K562 (cell line): ENCODE measurements at regions of chr3 and their contacts with region 1.

Region 1: DNA sequence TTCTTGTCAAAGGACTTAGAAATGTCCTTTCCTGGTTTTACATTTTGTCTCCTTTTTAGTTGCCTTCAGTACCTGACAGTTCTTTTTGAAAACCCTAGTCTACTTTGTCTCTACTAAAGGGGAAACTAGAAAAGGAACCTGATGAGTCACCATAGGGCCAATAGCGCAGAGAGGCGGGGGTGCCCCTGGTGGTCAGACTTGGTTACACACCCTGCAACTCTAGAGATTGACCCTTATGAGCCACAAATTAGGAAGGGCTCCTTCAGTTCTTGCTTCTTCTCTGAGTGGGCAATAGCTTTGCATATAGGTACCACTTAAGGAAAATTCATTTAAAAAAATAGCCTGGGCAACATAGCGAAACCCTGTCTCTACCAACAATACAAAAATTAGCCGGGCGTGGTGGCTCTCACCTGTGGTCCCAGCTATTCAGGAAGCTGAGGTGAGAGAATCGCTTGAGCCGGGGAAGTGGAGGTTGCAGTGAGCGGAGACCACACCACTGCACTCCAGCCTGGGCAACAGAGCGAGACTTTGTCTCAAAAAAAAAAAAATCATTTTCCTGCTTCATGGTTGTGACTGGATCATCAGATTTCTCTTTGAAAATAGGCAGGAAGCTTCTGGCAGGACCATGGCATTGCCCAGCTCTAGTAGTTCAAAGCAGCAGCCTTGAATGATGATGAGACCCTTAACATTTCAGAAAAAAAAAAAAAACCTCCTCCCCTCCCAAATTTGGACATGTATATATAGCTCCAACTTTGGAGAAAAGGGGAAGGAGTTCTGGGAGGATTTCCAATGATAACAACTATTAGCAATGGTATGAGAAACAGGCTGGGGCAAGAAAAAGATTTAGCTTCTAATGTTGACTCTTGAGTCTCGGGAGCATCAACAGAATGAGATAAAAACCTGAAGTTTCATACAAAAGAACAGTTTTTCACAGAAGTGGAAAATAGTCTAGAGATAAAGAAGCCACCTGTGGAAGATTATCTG is 45.2 kb upstream of the RASA2 start:
- DNase-seq: peak; percentile 83 to 88 (median 85)
- ATAC-seq: peak; percentile 99
- H3K4me3 ChIP-seq: no peak overlapping the region
- H3K27ac ChIP-seq: peak overlapping the region; percentile 73
- H3K4me1 ChIP-seq: peaks cover 0 to 14% of the 10 kb centered on the region in 2 experiments; a peak in 2 of 5 replicates
- H3K27me3 ChIP-seq: no peaks in the 10 kb centered on the region
- CTCF ChIP-seq: peak; percentile 84 to 89 (median 86)
- EP300 ChIP-seq: peak; percentile 27; the same call in 1 of the 2 replicates
- POLR2A ChIP-seq: no peak
- RAD21 ChIP-seq: peak; percentile 57 to 74

Region 2: DNA sequence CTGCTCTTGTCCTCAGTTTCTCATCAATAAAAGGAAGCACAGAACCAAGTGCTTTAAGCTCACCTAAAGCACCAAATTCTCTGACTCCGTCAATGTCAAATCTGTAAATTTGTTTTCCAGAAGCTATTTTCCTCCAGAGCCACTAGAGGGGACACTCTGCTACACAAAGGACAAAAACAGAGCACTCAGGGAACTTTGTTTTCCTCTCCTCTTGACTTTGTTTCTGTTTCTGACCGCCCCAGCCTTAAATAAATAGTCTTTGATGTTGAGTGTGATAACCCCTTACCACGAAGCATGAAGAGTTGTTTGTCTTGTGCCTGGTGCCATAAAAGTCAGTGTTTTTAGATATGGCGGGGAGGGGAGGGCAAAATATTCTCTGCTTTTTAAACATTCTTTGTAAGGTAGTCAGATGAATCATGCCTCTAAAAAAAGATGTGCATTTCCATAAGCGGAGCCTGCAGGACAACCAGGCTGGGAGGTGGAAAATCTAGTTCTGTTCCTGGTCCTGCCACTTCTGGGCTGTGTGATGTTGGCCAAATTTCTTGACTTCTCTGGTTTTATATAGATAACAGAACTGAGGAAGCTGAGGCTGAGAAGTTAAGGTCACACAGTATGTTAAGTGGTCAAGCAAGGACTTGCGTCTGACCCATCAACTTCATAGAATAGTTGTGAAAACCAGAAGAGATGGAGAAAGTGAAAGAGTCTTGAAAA is 80.6 kb before region 1 on chr3:
- CTCF ChIA-PET with region 1: no interaction called
- POLR2A ChIA-PET with region 1: no interaction called
- in situ Hi-C with region 1: loop called (anchors 5 kb)
- intact Hi-C with region 1: loop called (anchors 2 kb)
- DNase-seq: peak; percentile 45 to 78 (median 60)
- ATAC-seq: peak; percentile 86
- H3K4me3 ChIP-seq: no peak overlapping the region
- H3K27ac ChIP-seq: peak overlapping the region; percentile 37; the same call in 1 of the 3 replicates
- H3K4me1 ChIP-seq: peaks cover 0 to 30% of the 10 kb centered on the region in 2 experiments; a peak in 3 of 5 replicates
- H3K27me3 ChIP-seq: no peaks in the 10 kb centered on the region
- CTCF ChIP-seq: peak; percentile 77 to 90 (median 81)
- EP300 ChIP-seq: no peak
- POLR2A ChIP-seq: no peak
- RAD21 ChIP-seq: peak; percentile 90 to 93

Region 3: DNA sequence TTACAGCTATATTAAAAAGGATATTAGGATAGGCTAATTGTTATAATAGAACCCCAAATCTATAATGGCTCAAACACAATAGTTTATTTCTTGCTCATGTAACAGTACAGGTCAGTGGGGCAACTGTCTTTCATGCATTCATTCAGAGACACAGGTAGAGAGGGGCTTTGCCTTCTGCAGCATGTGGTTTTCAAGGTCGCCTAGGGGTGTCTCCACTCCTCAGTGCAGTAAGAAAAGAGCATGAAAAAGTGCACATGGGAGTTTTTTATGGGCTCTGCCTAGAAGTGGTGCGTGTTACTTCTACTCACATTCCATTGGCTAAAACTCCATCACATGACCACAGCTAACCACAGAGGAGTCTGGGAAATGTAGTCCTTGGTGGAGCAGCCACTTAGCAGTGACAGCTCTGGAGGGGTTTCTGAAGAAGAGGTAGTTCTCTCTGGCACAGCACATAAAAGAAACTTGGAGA is 71.6 kb before region 1 on chr3:
- CTCF ChIA-PET with region 1: no interaction called
- POLR2A ChIA-PET with region 1: no interaction called
- in situ Hi-C with region 1: loop called (anchors 5 kb)
- intact Hi-C with region 1: no loop called
- DNase-seq: peak; percentile 82 to 94 (median 87)
- ATAC-seq: peak; percentile 89
- H3K4me3 ChIP-seq: no peak overlapping the region; the same call in 1 of the 2 replicates
- H3K27ac ChIP-seq: peak overlapping the region; percentile 95
- H3K4me1 ChIP-seq: peaks cover 25 to 42% of the 10 kb centered on the region in 2 experiments
- H3K27me3 ChIP-seq: no peaks in the 10 kb centered on the region
- CTCF ChIP-seq: peak; percentile 61 to 73 (median 65)
- EP300 ChIP-seq: peak; percentile 34; the same call in 1 of the 2 replicates
- POLR2A ChIP-seq: peak; percentile 65
- RAD21 ChIP-seq: peak; percentile 49 to 58

Region 4: GRCh38 chr3:141402476-141403171 is 39.0 kb before region 1 on chr3:
- CTCF ChIA-PET with region 1: no interaction called
- POLR2A ChIA-PET with region 1: no interaction called
- in situ Hi-C with region 1: no loop called
- intact Hi-C with region 1: no loop called
- DNase-seq: no peak
- ATAC-seq: no peak
- H3K4me3 ChIP-seq: no peak overlapping the region
- H3K27ac ChIP-seq: no peak overlapping the region
- H3K4me1 ChIP-seq: 0 out of 5 replicates have a peak, but pooled peaks cover 0 to 2% of the 10 kb centered on the region in 2 experiments
- H3K27me3 ChIP-seq: no peaks in the 10 kb centered on the region
- CTCF ChIP-seq: no peak
- EP300 ChIP-seq: no peak
- POLR2A ChIP-seq: no peak
- RAD21 ChIP-seq: no peak